ENCODE measurements at regions of chr12 and their contacts with region 1.

Region 1: GRCh38 chr12:46675736-46676135 is 150.1 kb downstream of the SLC38A4 start:
- DNase-seq: peak in 1 of 2 donors; percentile 49
- ATAC-seq: no peak
- H3K4me3 ChIP-seq: no peak overlapping the region
- H3K27ac ChIP-seq: no peak overlapping the region
- H3K4me1 ChIP-seq: no peaks in the 10 kb centered on the region
- H3K27me3 ChIP-seq: no peaks in the 10 kb centered on the region

Region 2: GRCh38 chr12:46722394-46723185 is 46.9 kb after region 1 on chr12:
- intact Hi-C with region 1: no loop called
- DNase-seq: no peak
- ATAC-seq: no peak
- H3K4me3 ChIP-seq: no peak overlapping the region
- H3K27ac ChIP-seq: no peak overlapping the region
- H3K4me1 ChIP-seq: peaks cover 0 to 2% of the 10 kb centered on the region in 2 donors
- H3K27me3 ChIP-seq: no peaks in the 10 kb centered on the region

Region 3: GRCh38 chr12:46886541-46887041 is 210.9 kb after region 1 on chr12:
- intact Hi-C with region 1: no loop called
- DNase-seq: no peak
- ATAC-seq: no peak
- H3K4me3 ChIP-seq: no peak overlapping the region
- H3K27ac ChIP-seq: no peak overlapping the region
- H3K4me1 ChIP-seq: peaks cover 0 to 3% of the 10 kb centered on the region in 2 donors
- H3K27me3 ChIP-seq: no peaks in the 10 kb centered on the region

Region 4: GRCh38 chr12:46933947-46934346 is 258.2 kb after region 1 on chr12:
- intact Hi-C with region 1: loop called (anchors 5 kb)
- DNase-seq: no peak
- ATAC-seq: peak; percentile 62
- H3K4me3 ChIP-seq: no peak overlapping the region
- H3K27ac ChIP-seq: no peak overlapping the region
- H3K4me1 ChIP-seq: no peaks in the 10 kb centered on the region
- H3K27me3 ChIP-seq: no peaks in the 10 kb centered on the region

Region 5: DNA sequence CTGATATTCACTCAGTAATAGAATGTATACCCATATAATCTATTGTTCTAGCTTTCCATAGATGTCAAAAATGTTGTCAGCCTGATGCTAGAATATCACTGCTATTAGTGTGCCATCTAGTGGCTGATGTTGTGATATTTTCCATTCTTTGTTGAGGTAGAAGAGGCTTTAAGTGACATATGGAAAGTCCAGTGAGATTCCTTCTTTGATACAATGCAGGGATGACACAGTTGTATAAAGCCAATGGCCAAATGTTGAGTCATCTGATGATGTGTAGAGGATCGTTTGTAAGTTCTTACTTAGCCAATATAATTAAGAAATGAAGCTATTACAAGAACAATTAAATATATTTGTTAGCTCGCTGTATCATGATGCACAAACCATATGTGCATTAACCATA is 345.6 kb after region 1 on chr12:
- intact Hi-C with region 1: loop called (anchors 5 kb)
- DNase-seq: no peak
- ATAC-seq: no peak
- H3K4me3 ChIP-seq: no peak overlapping the region
- H3K27ac ChIP-seq: no peak overlapping the region
- H3K4me1 ChIP-seq: no peaks in the 10 kb centered on the region
- H3K27me3 ChIP-seq: no peaks in the 10 kb centered on the region